PC-9 (cell line): ENCODE measurements at regions of chrX and their contacts with region 1.

Region 1: GRCh38 chrX:7953446-7953845 is 26.2 kb upstream of the PNPLA4 start:
- DNase-seq: no peak
- H3K4me3 ChIP-seq: no peak overlapping the region
- H3K27ac ChIP-seq: no peak overlapping the region
- H3K4me1 ChIP-seq: no peaks in the 10 kb centered on the region
- H3K27me3 ChIP-seq: no peaks in the 10 kb centered on the region
- CTCF ChIP-seq: no peak

Region 2: GRCh38 chrX:7242613-7243012 is 710.8 kb before region 1 on chrX:
- CTCF ChIA-PET with region 1: interaction called, 14 read pairs
- POLR2A ChIA-PET with region 1: no interaction called
- intact Hi-C with region 1: no loop called
- DNase-seq: no peak
- H3K4me3 ChIP-seq: no peak overlapping the region
- H3K27ac ChIP-seq: no peak overlapping the region
- H3K4me1 ChIP-seq: no peaks in the 10 kb centered on the region
- H3K27me3 ChIP-seq: no peaks in the 10 kb centered on the region
- CTCF ChIP-seq: no peak

Region 3: GRCh38 chrX:8179656-8180055 is 226.2 kb after region 1 on chrX:
- CTCF ChIA-PET with region 1: no interaction called
- POLR2A ChIA-PET with region 1: no interaction called
- intact Hi-C with region 1: no loop called
- DNase-seq: no peak
- H3K4me3 ChIP-seq: no peak overlapping the region
- H3K27ac ChIP-seq: no peak overlapping the region
- H3K4me1 ChIP-seq: no peaks in the 10 kb centered on the region
- H3K27me3 ChIP-seq: no peaks in the 10 kb centered on the region
- CTCF ChIP-seq: peak; percentile 61

Region 4: GRCh38 chrX:8864161-8864560 is 910.7 kb after region 1 on chrX:
- CTCF ChIA-PET with region 1: no interaction called
- POLR2A ChIA-PET with region 1: no interaction called
- intact Hi-C with region 1: no loop called
- DNase-seq: no peak
- H3K4me3 ChIP-seq: no peak overlapping the region
- H3K27ac ChIP-seq: no peak overlapping the region
- H3K4me1 ChIP-seq: peaks cover 22% of the 10 kb centered on the region
- H3K27me3 ChIP-seq: no peaks in the 10 kb centered on the region
- CTCF ChIP-seq: no peak